K562 (cell line): ENCODE measurements at regions of chr6 and their contacts with region 1.

Region 1: GRCh38 chr6:160992061-160992979 is 751 bp downstream of the MAP3K4 start:
- DNase-seq: peak; percentile 84 to 91 (median 86)
- ATAC-seq: peak; percentile 77
- H3K4me3 ChIP-seq: peak overlapping the region; percentile 86
- H3K27ac ChIP-seq: peak overlapping the region; percentile 81
- H3K4me1 ChIP-seq: peaks cover 12% of the 10 kb centered on the region in 2 experiments; a peak in 4 of 5 replicates
- H3K27me3 ChIP-seq: no peaks in the 10 kb centered on the region
- CTCF ChIP-seq: peak; percentile 87 to 96 (median 92)
- EP300 ChIP-seq: peak; percentile 28; the same call in 1 of the 2 replicates
- POLR2A ChIP-seq: peak; percentile 58; the same call in 1 of the 2 replicates
- RAD21 ChIP-seq: peak; percentile 91 to 92

Region 2: GRCh38 chr6:159298840-159299239 is 1693.5 kb before region 1 on chr6:
- CTCF ChIA-PET with region 1: no interaction called
- POLR2A ChIA-PET with region 1: no interaction called
- in situ Hi-C with region 1: no loop called
- intact Hi-C with region 1: no loop called
- DNase-seq: no peak
- ATAC-seq: peak; percentile 70
- H3K4me3 ChIP-seq: no peak overlapping the region
- H3K27ac ChIP-seq: no peak overlapping the region
- H3K4me1 ChIP-seq: no peaks in the 10 kb centered on the region
- H3K27me3 ChIP-seq: peaks cover 3 to 17% of the 10 kb centered on the region in 2 experiments; a peak in 2 of 5 replicates
- CTCF ChIP-seq: peak; percentile 31 to 39 (median 35); a peak in 3 of 6 replicates
- EP300 ChIP-seq: no peak
- POLR2A ChIP-seq: no peak
- RAD21 ChIP-seq: no peak

Region 3: GRCh38 chr6:160750276-160750689 is 242.0 kb before region 1 on chr6:
- CTCF ChIA-PET with region 1: no interaction called
- POLR2A ChIA-PET with region 1: interaction called, 3 read pairs
- in situ Hi-C with region 1: no loop called
- intact Hi-C with region 1: loop called (anchors 1 kb)
- DNase-seq: peak; percentile 41 to 65 (median 45)
- ATAC-seq: peak; percentile 91
- H3K4me3 ChIP-seq: no peak overlapping the region
- H3K27ac ChIP-seq: no peak overlapping the region
- H3K4me1 ChIP-seq: no peaks in the 10 kb centered on the region; a peak in 1 of 5 replicates
- H3K27me3 ChIP-seq: no peaks in the 10 kb centered on the region
- CTCF ChIP-seq: peak; percentile 73 to 92 (median 80)
- EP300 ChIP-seq: no peak
- POLR2A ChIP-seq: no peak
- RAD21 ChIP-seq: peak; percentile 69 to 82

Region 4: DNA sequence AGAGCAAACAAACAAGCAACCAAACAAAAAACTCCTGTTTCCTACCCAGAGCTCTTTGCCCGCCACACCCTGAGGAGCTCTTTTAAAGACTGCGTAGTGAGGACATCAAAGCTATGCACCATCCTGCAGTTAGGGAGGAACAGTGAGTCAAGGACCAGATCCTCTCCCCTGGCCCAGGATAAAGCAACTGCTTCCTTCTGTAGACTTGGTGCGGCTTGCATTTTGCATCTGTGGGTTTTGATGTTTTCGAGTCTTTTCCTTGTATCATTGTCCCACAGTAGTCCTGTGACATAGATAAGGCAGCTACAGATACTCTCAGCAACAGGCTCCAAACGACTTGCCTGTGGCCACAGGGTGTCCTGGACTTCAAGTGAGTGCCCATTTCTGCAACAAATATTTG is 36.8 kb before region 1 on chr6:
- CTCF ChIA-PET with region 1: no interaction called
- POLR2A ChIA-PET with region 1: no interaction called
- in situ Hi-C with region 1: no loop called
- intact Hi-C with region 1: loop called (anchors 1 kb)
- DNase-seq: peak in 2 of 4 experiments; percentile 46 to 77
- ATAC-seq: peak; percentile 79
- H3K4me3 ChIP-seq: no peak overlapping the region
- H3K27ac ChIP-seq: no peak overlapping the region
- H3K4me1 ChIP-seq: peaks cover 15 to 17% of the 10 kb centered on the region in 2 experiments; a peak in 4 of 5 replicates
- H3K27me3 ChIP-seq: peaks cover 0 to 7% of the 10 kb centered on the region in 2 experiments; a peak in 2 of 5 replicates
- CTCF ChIP-seq: no peak; a peak in 1 of 6 replicates
- EP300 ChIP-seq: no peak
- POLR2A ChIP-seq: no peak
- RAD21 ChIP-seq: 0 out of 4 replicates have a peak, but pooled peaks of 1 of the 2 experiments have one; percentile 6

Region 5: DNA sequence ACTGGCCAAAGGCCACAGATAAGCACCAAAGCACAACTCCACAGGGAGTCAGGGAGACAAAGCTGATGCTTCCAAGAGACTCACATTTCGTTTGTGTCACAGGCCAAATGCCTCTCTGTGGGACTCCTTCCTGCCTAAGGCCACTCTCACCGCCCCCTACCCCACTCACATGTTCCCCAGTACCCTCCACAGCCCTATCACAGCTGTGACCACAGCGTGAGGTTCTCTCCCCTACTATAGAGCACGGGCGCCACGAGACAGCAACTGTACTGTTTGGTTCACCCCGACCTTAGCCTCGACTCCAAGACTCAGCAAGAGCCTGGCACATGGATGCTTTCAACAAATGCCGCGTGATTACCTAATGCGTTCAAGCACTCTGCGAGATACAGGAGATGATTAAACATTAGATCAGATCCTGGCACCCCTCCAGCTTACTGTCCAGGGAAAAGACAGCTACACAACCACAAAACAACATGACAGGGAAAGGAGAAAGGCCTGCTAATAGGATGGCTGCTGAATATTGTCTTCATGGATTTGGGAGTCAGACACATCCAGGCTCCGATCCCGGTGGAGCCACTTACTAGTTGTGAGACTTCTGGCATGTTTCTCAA is 176.1 kb after region 1 on chr6:
- CTCF ChIA-PET with region 1: no interaction called
- POLR2A ChIA-PET with region 1: no interaction called
- in situ Hi-C with region 1: no loop called
- intact Hi-C with region 1: loop called (anchors 5 kb)
- DNase-seq: peak in 1 of 4 experiments; percentile 33
- ATAC-seq: no peak
- H3K4me3 ChIP-seq: no peak overlapping the region
- H3K27ac ChIP-seq: no peak overlapping the region
- H3K4me1 ChIP-seq: peaks cover 21 to 27% of the 10 kb centered on the region in 2 experiments; a peak in 4 of 5 replicates
- H3K27me3 ChIP-seq: 0 out of 5 replicates have a peak, but pooled peaks cover 0 to 10% of the 10 kb centered on the region in 2 experiments
- CTCF ChIP-seq: no peak
- EP300 ChIP-seq: no peak
- POLR2A ChIP-seq: no peak
- RAD21 ChIP-seq: no peak

Region 6: GRCh38 chr6:161353208-161353613 is 360.9 kb after region 1 on chr6:
- CTCF ChIA-PET with region 1: no interaction called
- POLR2A ChIA-PET with region 1: interaction called, 4 read pairs
- in situ Hi-C with region 1: no loop called
- intact Hi-C with region 1: loop called (anchors 5 kb)
- DNase-seq: peak; percentile 54 to 80 (median 66)
- ATAC-seq: peak; percentile 90
- H3K4me3 ChIP-seq: no peak overlapping the region
- H3K27ac ChIP-seq: no peak overlapping the region
- H3K4me1 ChIP-seq: peaks cover 2 to 14% of the 10 kb centered on the region in 2 experiments; a peak in 3 of 5 replicates
- H3K27me3 ChIP-seq: no peaks in the 10 kb centered on the region
- CTCF ChIP-seq: peak; percentile 76 to 85 (median 79)
- EP300 ChIP-seq: no peak
- POLR2A ChIP-seq: no peak
- RAD21 ChIP-seq: peak; percentile 27 to 82; a peak in 2 of 4 replicates